ENCODE measurements at regions of chr2 and their contacts with region 1.

Region 1: GRCh38 chr2:66574701-66575624 is 140.0 kb downstream of the MEIS1 start:
- DNase-seq: peak; percentile 92
- H3K4me3 ChIP-seq: peak overlapping the region; percentile 52 to 73 (median 68)
- H3K27ac ChIP-seq: peak overlapping the region; percentile 95 to 99 (median 98)
- H3K4me1 ChIP-seq: peaks cover 0 to 58% (median 42%) of the 10 kb centered on the region in 4 donors
- H3K27me3 ChIP-seq: peaks cover 0 to under 1% (median 0%) of the 10 kb centered on the region in 3 donors
- CTCF ChIP-seq: peak in 3 of 4 experiments; percentile 29 to 40 (median 34)
- EP300 ChIP-seq: no peak
- POLR2A ChIP-seq: no peak

Region 2: GRCh38 chr2:65630643-65631042 is 944.3 kb before region 1 on chr2:
- intact Hi-C with region 1: loop called (anchors 10 kb)
- DNase-seq: no peak
- H3K4me3 ChIP-seq: no peak overlapping the region
- H3K27ac ChIP-seq: peak overlapping the region in 3 of 4 donors; percentile 31 to 85 (median 68)
- H3K4me1 ChIP-seq: peaks cover 0 to 15% (median 11%) of the 10 kb centered on the region in 4 donors
- H3K27me3 ChIP-seq: no peaks in the 10 kb centered on the region
- CTCF ChIP-seq: no peak
- EP300 ChIP-seq: peak in 2 of 4 donors; percentile 57 to 92
- POLR2A ChIP-seq: no peak

Region 3: DNA sequence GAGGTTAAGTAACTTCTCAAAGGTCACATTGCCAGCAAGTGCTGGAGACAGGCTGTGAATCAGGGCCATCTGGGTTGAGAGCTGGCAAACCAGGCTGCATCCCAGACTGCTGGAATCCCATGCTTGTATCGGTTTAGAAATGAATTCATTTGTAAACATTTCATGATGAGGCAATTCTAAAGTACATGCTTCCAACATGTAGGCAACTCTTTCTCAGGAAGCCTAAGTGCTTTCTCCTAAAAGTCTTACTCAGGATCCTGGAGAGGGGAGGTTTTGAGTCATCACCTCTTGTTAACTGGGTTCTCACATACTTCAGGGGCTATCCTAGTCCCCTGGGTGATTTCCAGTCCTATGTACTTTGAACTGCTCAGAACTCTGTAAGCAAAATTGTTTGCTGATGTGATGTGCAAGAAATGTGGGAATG is 276.5 kb after region 1 on chr2:
- intact Hi-C with region 1: loop called (anchors 2 kb)
- DNase-seq: peak; percentile 81
- H3K4me3 ChIP-seq: no peak overlapping the region
- H3K27ac ChIP-seq: peak overlapping the region in 3 of 4 donors; percentile 87 to 91 (median 89)
- H3K4me1 ChIP-seq: peaks cover 0 to 64% (median 58%) of the 10 kb centered on the region in 4 donors
- H3K27me3 ChIP-seq: no peaks in the 10 kb centered on the region
- CTCF ChIP-seq: no peak
- EP300 ChIP-seq: peak in 1 of 4 donors; percentile 50
- POLR2A ChIP-seq: no peak

Region 4: DNA sequence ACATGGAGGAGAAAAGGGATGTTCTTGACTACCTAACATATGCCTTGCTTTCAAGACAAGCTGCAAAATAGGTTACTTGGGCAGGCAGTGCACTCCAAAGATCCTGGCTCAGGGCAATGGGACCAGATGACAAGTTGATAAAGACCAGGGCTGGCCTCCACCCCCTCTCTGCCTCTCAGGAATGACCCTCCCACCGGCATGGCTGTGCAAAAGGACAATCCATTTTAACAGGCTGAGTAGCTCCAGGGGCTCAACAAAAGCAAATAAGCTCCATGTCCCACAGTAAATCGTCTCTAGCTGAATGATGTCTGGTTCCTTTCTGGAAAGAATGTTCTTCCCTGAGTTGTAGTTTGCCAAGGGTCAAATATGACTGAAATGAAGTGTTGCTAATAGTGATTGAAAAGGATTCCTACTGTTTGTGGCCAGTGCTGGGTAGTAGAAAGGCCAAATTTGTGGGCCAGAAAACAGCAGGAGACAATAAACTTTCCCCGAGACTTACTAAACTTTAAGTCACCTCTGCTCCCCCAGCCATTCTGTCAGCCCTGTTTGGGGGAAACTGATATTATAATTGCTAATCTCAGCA is 387.8 kb after region 1 on chr2:
- intact Hi-C with region 1: loop called (anchors 5 kb)
- DNase-seq: peak; percentile 94
- H3K4me3 ChIP-seq: no peak overlapping the region
- H3K27ac ChIP-seq: peak overlapping the region; percentile 44 to 87 (median 82)
- H3K4me1 ChIP-seq: peaks cover 0 to 51% (median 26%) of the 10 kb centered on the region in 4 donors
- H3K27me3 ChIP-seq: no peaks in the 10 kb centered on the region
- CTCF ChIP-seq: no peak
- EP300 ChIP-seq: peak; percentile 58 to 93 (median 78)
- POLR2A ChIP-seq: no peak

Region 5: GRCh38 chr2:67397143-67397986 is 822.4 kb after region 1 on chr2 and contains the start of gene ETAA1:
- intact Hi-C with region 1: loop called (anchors 10 kb)
- DNase-seq: peak; percentile 97
- H3K4me3 ChIP-seq: peak within 1 kb of the TSS; percentile 76 to 88 (median 83)
- H3K27ac ChIP-seq: peak within 1 kb of the TSS; percentile 90 to 95 (median 94)
- H3K4me1 ChIP-seq: peaks cover 0 to 31% (median 13%) of the 10 kb centered on the region in 4 donors
- H3K27me3 ChIP-seq: no peaks in the 10 kb centered on the region
- CTCF ChIP-seq: no peak
- EP300 ChIP-seq: no peak
- POLR2A ChIP-seq: peak; percentile 77 to 82
- total RNA-seq, gene ETAA1: 12.1 to 20.0 (median 15.8) TPM

Region 6: DNA sequence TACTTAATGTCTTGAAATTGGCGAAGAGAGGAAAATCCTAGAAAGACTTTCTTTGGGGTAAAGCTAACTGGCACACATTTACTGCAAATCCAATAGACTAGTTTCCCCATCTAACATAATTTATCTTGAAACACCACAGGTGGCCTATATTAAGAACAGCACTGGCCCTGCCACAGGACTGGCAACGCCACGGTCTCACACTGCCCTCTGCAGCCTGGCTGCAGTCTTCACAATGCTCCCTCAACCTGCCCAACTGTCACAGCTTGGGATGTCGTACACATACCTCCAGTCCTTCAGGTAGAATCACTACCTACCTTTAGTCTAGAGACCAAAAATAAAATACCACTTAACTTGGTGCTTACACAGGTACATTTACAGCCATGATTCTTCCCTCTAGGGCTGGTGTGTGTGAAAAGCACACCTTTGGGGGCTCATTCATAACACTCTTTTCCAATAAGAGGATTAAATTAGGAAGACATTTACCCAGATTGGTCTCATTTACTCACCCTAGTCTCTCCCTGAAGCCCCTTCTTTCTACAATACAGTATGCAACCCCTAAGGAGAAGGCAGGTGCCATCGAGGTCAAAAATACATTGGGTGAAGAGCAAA is 1265.6 kb after region 1 on chr2:
- intact Hi-C with region 1: loop called (anchors 5 kb)
- DNase-seq: peak; percentile 85
- H3K4me3 ChIP-seq: no peak overlapping the region
- H3K27ac ChIP-seq: peak overlapping the region in 1 of 4 donors; percentile 29
- H3K4me1 ChIP-seq: peaks cover 0 to 18% (median 1%) of the 10 kb centered on the region in 4 donors
- H3K27me3 ChIP-seq: no peaks in the 10 kb centered on the region
- CTCF ChIP-seq: peak; percentile 59 to 84 (median 79)
- EP300 ChIP-seq: no peak
- POLR2A ChIP-seq: no peak